ENCODE measurements at regions of chr7 and their contacts with region 1.

Region 1: DNA sequence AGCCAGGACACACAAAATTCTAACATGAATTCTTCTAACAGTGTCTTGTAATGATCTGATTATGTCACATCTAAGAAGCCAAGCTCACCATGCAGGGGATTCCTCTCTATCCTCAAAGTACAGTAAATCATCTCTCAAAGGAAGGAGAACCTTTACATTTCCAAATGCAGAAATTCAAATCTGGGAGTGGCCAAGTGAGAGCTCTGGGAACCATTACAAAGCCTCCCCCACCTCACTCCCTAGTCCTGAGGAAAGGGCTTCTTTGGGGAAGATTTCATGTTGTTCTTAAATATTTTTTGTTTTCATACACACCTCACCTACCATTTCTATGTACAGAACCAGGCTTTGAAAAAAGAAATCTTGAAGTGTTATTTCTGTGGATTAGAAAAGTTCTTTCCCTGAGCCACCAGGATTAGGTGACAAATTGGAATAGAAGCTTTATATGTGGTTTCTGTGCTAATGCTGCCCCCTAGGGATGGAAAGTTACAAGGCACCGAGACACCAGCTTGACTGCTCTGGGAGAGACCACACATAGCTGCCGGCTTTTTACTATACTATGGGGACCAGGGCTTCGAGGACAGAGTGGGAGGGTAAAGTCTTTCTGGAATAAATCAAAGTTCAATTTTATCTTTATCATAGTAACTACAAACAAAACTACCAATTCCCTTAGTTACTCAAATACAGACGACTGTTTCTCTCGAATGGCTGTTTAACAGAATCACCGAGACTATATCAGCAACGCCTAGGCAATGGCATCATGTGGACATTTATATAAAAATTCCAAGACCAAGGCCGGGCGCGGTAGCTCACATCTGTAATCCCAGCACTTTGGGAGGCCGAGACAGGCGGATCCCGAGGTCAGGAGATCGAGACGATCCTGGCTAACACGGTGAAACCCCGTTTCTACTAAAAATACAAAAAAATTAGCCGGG is 116.1 kb downstream of the RNF216 start:
- DNase-seq: peak; percentile 65 to 82
- H3K4me3 ChIP-seq: no peak overlapping the region
- H3K27ac ChIP-seq: no peak overlapping the region
- H3K4me1 ChIP-seq: no peaks in the 10 kb centered on the region
- H3K27me3 ChIP-seq: no peaks in the 10 kb centered on the region
- CTCF ChIP-seq: peak; percentile 92

Region 2: DNA sequence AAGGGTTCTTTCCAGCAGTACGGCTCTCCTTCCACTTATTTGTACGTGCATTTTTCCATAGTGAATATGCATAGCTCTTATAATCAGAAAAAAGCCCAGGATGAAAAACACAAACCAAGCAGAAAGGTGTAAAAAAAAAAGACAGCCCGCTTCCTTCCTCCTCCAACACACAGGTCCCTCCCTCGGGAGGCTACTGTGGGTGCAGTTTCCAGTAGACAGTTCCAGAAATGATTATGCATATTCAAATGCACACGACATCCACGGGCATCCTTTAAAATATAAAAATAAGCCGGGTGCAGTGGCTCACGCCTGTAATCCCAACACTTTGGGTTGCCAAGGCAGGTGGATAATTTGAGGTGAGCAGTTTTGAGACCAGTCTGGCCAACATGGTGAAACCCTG is 301.6 kb before region 1 on chr7:
- CTCF ChIA-PET with region 1: no interaction called
- POLR2A ChIA-PET with region 1: no interaction called
- intact Hi-C with region 1: no loop called
- DNase-seq: no peak
- H3K4me3 ChIP-seq: no peak overlapping the region
- H3K27ac ChIP-seq: no peak overlapping the region
- H3K4me1 ChIP-seq: 0 out of 2 replicates have a peak, but pooled peaks cover 5% of the 10 kb centered on the region
- H3K27me3 ChIP-seq: no peaks in the 10 kb centered on the region
- CTCF ChIP-seq: no peak

Region 3: GRCh38 chr7:5406957-5407945 is 258.1 kb before region 1 on chr7:
- CTCF ChIA-PET with region 1: no interaction called
- POLR2A ChIA-PET with region 1: no interaction called
- intact Hi-C with region 1: no loop called
- DNase-seq: peak in 1 of 2 experiments; percentile 10
- H3K4me3 ChIP-seq: no peak overlapping the region
- H3K27ac ChIP-seq: no peak overlapping the region
- H3K4me1 ChIP-seq: peaks cover 19% of the 10 kb centered on the region
- H3K27me3 ChIP-seq: no peaks in the 10 kb centered on the region
- CTCF ChIP-seq: no peak

Region 4: GRCh38 chr7:5494683-5495561 is 170.4 kb before region 1 on chr7:
- CTCF ChIA-PET with region 1: interaction called, 20 read pairs
- POLR2A ChIA-PET with region 1: interaction called, 8 read pairs
- intact Hi-C with region 1: loop called (anchors 1 kb)
- DNase-seq: peak; percentile 84 to 95
- H3K4me3 ChIP-seq: peak overlapping the region; percentile 22; the same call in 1 of the 2 replicates
- H3K27ac ChIP-seq: peak overlapping the region; percentile 63
- H3K4me1 ChIP-seq: peaks cover 19% of the 10 kb centered on the region
- H3K27me3 ChIP-seq: no peaks in the 10 kb centered on the region
- CTCF ChIP-seq: peak; percentile 98

Region 5: DNA sequence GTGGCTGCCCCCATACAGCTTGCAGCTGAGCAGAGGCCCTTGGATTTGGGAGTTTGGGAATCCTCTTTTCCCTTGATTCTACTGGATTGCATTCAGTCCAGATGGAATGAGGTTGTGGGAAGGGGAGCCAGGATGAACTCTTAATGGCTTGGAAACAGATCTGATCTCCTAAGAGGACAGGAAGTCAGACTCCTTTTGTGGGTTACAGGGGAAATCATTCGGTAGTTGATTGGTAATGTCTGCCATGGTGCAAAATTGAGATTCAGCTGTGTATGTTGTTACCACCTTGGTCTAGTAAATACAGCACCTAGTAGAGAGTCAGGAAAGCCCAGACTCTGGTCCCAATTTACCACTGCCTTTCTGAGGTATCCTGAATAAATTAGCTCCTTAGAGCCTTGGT is 97.6 kb before region 1 on chr7:
- CTCF ChIA-PET with region 1: interaction called, 12 read pairs
- POLR2A ChIA-PET with region 1: no interaction called
- intact Hi-C with region 1: no loop called
- DNase-seq: no peak
- H3K4me3 ChIP-seq: no peak overlapping the region
- H3K27ac ChIP-seq: no peak overlapping the region
- H3K4me1 ChIP-seq: peaks cover 29% of the 10 kb centered on the region
- H3K27me3 ChIP-seq: no peaks in the 10 kb centered on the region
- CTCF ChIP-seq: no peak

Region 6: DNA sequence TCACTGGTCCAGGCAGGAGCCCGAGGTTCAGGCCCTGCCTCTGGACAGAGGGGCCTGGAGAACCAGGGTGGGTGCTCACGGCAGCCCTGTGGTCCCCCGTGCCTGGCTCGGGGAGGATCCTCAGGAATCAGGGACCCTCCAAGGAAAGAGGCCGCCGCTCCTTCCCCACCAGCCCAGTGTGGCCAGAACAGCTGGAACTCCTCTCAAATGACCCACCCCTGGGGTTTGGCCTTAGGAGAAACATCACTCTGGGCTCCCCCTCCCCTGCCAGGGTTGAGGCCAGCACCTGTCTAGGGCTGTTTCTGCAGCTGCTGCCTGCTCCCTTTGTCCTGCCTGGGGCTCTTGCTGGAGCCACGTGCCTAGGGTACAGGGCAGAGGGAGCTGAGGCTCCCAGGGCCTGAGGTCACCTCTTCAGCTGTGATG is 44.9 kb before region 1 on chr7:
- CTCF ChIA-PET with region 1: no interaction called
- POLR2A ChIA-PET with region 1: no interaction called
- intact Hi-C with region 1: no loop called
- DNase-seq: no peak
- H3K4me3 ChIP-seq: no peak overlapping the region
- H3K27ac ChIP-seq: no peak overlapping the region
- H3K4me1 ChIP-seq: no peaks in the 10 kb centered on the region
- H3K27me3 ChIP-seq: no peaks in the 10 kb centered on the region
- CTCF ChIP-seq: no peak

Region 7: GRCh38 chr7:5646852-5647251 is 18.5 kb before region 1 on chr7:
- CTCF ChIA-PET with region 1: interaction called, 15 read pairs
- POLR2A ChIA-PET with region 1: interaction called, 11 read pairs
- intact Hi-C with region 1: no loop called
- DNase-seq: peak in 1 of 2 experiments; percentile 20
- H3K4me3 ChIP-seq: no peak overlapping the region
- H3K27ac ChIP-seq: no peak overlapping the region
- H3K4me1 ChIP-seq: peaks cover 26% of the 10 kb centered on the region
- H3K27me3 ChIP-seq: no peaks in the 10 kb centered on the region
- CTCF ChIP-seq: no peak

Region 8: GRCh38 chr7:5704534-5704922 is 39.2 kb after region 1 on chr7:
- CTCF ChIA-PET with region 1: interaction called, 4 read pairs
- POLR2A ChIA-PET with region 1: no interaction called
- intact Hi-C with region 1: loop called (anchors 2 kb)
- DNase-seq: peak; percentile 66 to 76
- H3K4me3 ChIP-seq: no peak overlapping the region
- H3K27ac ChIP-seq: no peak overlapping the region
- H3K4me1 ChIP-seq: peaks cover 8% of the 10 kb centered on the region
- H3K27me3 ChIP-seq: no peaks in the 10 kb centered on the region
- CTCF ChIP-seq: peak; percentile 95

Region 9: GRCh38 chr7:6385110-6385971 is 720.0 kb after region 1 on chr7:
- CTCF ChIA-PET with region 1: no interaction called
- POLR2A ChIA-PET with region 1: no interaction called
- intact Hi-C with region 1: no loop called
- DNase-seq: peak; percentile 71 to 100
- H3K4me3 ChIP-seq: peak overlapping the region; percentile 17; the same call in 1 of the 2 replicates
- H3K27ac ChIP-seq: peak overlapping the region; percentile 90
- H3K4me1 ChIP-seq: peaks cover 92% of the 10 kb centered on the region
- H3K27me3 ChIP-seq: no peaks in the 10 kb centered on the region
- CTCF ChIP-seq: no peak

Measured in PC-9 (cell line).